Activated B cell treated with CpG ODN at 0.5 μM for 24 hours (primary cell): ENCODE measurements at regions of chr7 and their contacts with region 1.

Region 1: GRCh38 chr7:38873433-38873832 is 35.6 kb downstream of the VPS41 start:
- DNase-seq: no peak
- ATAC-seq: no peak
- H3K4me3 Mint-ChIP-seq: no peak overlapping the region
- H3K27ac Mint-ChIP-seq: no peak overlapping the region
- H3K4me1 Mint-ChIP-seq: peaks cover 63% of the 10 kb centered on the region
- H3K27me3 Mint-ChIP-seq: no peaks in the 10 kb centered on the region
- CTCF ChIP-seq: no peak

Region 2: GRCh38 chr7:38855867-38856266 is 17.6 kb before region 1 on chr7:
- CTCF ChIA-PET with region 1: no interaction called
- POLR2A ChIA-PET with region 1: no interaction called
- intact Hi-C with region 1: loop called (anchors 2 kb)
- DNase-seq: no peak
- ATAC-seq: no peak
- H3K4me3 Mint-ChIP-seq: peak overlapping the region; percentile 28
- H3K27ac Mint-ChIP-seq: peak overlapping the region; percentile 68
- H3K4me1 Mint-ChIP-seq: peaks cover 48% of the 10 kb centered on the region
- H3K27me3 Mint-ChIP-seq: no peaks in the 10 kb centered on the region
- CTCF ChIP-seq: no peak